ENCODE measurements at regions of chr12 and their contacts with region 1.

Region 1: GRCh38 chr12:22544038-22544979 is at the start of gene C2CD5:
- DNase-seq: peak; percentile 97
- H3K4me3 Mint-ChIP-seq: peak within 1 kb of the TSS; percentile 95
- H3K27ac Mint-ChIP-seq: peak within 1 kb of the TSS; percentile 93
- H3K4me1 Mint-ChIP-seq: peaks cover 31% of the 10 kb centered on the region
- H3K27me3 Mint-ChIP-seq: no peaks in the 10 kb centered on the region
- total RNA-seq, gene C2CD5: 32.6 to 32.8 TPM

Region 2: GRCh38 chr12:21451529-21451928 is 1092.8 kb before region 1 on chr12:
- CTCF ChIA-PET with region 1: no interaction called
- POLR2A ChIA-PET with region 1: no interaction called
- intact Hi-C with region 1: loop called (anchors 5 kb)
- DNase-seq: no peak
- H3K4me3 Mint-ChIP-seq: no peak overlapping the region
- H3K27ac Mint-ChIP-seq: no peak overlapping the region
- H3K4me1 Mint-ChIP-seq: peaks cover 40% of the 10 kb centered on the region
- H3K27me3 Mint-ChIP-seq: no peaks in the 10 kb centered on the region

Region 3: DNA sequence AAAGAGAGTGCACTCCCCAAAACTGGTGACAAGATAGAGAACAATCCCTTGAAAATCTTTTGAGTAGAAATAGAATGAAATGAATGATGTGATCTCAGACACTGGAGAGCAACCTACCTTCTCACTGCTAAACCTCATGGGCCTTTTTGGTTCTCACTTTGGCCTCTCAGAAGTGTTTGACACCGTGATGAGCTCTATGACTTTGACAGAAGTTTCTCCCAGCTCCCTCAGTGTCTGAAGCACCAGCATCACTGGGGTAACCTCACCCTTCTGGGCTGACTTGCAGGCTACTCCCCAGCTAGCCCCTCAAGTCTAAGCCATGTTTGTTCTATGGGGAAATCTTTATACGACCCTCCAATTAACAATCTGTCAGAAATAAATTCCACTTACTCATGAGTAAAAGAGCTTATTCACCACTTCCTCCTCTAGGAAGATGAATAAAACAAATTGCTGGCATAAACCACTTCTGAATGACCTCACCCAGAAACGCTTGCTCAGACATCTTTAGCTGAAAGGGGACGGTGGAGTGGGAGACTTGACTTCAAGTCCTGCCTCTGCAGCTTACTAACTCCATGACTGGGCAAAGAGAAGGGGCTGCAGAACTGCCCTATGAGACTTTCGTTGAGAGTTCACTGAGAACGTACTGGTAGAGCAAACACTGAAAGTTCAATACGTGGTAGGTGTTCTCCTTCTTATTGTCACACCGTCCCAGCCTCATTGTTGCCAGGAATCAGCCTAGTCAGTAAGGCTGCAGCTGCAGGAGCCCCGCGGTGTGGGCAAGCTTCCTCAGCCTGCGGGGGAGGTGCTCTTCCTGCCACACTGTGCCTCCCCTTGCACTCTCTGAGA is 256.3 kb before region 1 on chr12:
- CTCF ChIA-PET with region 1: no interaction called
- POLR2A ChIA-PET with region 1: no interaction called
- intact Hi-C with region 1: loop called (anchors 10 kb)
- DNase-seq: peak; percentile 73
- H3K4me3 Mint-ChIP-seq: peak overlapping the region; percentile 77
- H3K27ac Mint-ChIP-seq: peak overlapping the region; percentile 95
- H3K4me1 Mint-ChIP-seq: peaks cover 59% of the 10 kb centered on the region
- H3K27me3 Mint-ChIP-seq: no peaks in the 10 kb centered on the region

Region 4: GRCh38 chr12:22477166-22477893 is 67.0 kb before region 1 on chr12:
- CTCF ChIA-PET with region 1: no interaction called
- POLR2A ChIA-PET with region 1: interaction called, 3 read pairs
- intact Hi-C with region 1: loop called (anchors 5 kb)
- DNase-seq: no peak
- H3K4me3 Mint-ChIP-seq: no peak overlapping the region
- H3K27ac Mint-ChIP-seq: peak overlapping the region; percentile 14
- H3K4me1 Mint-ChIP-seq: peaks cover 27% of the 10 kb centered on the region
- H3K27me3 Mint-ChIP-seq: no peaks in the 10 kb centered on the region

Region 5: GRCh38 chr12:22569253-22569652 is 24.9 kb after region 1 on chr12:
- CTCF ChIA-PET with region 1: no interaction called
- POLR2A ChIA-PET with region 1: no interaction called
- intact Hi-C with region 1: no loop called
- DNase-seq: no peak
- H3K4me3 Mint-ChIP-seq: no peak overlapping the region
- H3K27ac Mint-ChIP-seq: no peak overlapping the region
- H3K4me1 Mint-ChIP-seq: no peaks in the 10 kb centered on the region
- H3K27me3 Mint-ChIP-seq: peaks cover 6% of the 10 kb centered on the region

Region 6: DNA sequence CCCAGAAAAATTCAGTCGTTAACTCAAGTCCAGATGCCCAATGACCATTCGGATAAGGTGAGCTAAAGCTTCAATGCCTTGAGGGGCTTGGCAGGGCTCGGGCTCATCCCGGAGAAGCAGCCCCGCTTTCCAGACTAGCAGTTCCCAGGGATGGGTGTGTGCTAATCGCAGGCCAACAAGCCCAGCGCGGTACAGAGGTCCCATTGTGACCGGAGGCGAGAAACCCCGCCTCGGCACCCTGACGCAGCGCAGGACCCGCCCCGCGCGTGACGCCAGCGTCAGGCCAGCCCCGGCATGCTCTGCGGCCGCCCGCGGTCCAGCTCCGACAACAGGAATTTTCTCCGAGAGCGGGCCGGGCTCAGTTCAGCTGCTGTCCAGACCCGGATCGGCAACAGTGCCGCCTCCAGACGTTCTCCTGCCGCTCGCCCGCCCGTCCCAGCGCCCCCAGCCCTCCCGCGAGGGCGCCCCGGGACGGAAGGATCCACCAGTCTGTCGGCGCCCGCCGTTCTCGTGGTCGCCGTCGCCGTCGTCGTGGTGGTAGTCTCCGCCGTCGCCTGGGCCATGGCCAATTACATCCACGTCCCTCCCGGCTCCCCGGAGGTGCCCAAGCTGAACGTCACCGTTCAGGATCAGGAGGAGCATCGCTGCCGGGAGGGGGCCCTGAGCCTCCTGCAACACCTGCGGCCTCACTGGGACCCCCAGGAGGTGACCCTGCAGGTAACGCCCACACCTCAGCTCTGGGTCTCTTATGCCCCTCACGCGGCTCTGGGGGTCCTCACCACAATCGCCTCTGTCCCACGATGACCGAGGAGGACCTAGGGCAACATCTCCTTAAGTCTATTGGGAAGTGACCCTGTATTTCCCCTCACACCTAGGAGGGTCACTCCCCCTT is 80.8 kb after region 1 on chr12 and contains the start of gene ETNK1:
- CTCF ChIA-PET with region 1: interaction called, 7 read pairs
- POLR2A ChIA-PET with region 1: interaction called, 14 read pairs
- intact Hi-C with region 1: loop called (anchors 1 kb)
- DNase-seq: peak; percentile 92
- H3K4me3 Mint-ChIP-seq: peak within 1 kb of the TSS; percentile 89
- H3K27ac Mint-ChIP-seq: peak within 1 kb of the TSS; percentile 87
- H3K4me1 Mint-ChIP-seq: peaks cover 35% of the 10 kb centered on the region
- H3K27me3 Mint-ChIP-seq: no peaks in the 10 kb centered on the region
- total RNA-seq, gene ETNK1: 59.0 to 61.0 TPM